SK-N-SH (cell line): ENCODE measurements at regions of chr17 and their contacts with region 1.

Region 1: DNA sequence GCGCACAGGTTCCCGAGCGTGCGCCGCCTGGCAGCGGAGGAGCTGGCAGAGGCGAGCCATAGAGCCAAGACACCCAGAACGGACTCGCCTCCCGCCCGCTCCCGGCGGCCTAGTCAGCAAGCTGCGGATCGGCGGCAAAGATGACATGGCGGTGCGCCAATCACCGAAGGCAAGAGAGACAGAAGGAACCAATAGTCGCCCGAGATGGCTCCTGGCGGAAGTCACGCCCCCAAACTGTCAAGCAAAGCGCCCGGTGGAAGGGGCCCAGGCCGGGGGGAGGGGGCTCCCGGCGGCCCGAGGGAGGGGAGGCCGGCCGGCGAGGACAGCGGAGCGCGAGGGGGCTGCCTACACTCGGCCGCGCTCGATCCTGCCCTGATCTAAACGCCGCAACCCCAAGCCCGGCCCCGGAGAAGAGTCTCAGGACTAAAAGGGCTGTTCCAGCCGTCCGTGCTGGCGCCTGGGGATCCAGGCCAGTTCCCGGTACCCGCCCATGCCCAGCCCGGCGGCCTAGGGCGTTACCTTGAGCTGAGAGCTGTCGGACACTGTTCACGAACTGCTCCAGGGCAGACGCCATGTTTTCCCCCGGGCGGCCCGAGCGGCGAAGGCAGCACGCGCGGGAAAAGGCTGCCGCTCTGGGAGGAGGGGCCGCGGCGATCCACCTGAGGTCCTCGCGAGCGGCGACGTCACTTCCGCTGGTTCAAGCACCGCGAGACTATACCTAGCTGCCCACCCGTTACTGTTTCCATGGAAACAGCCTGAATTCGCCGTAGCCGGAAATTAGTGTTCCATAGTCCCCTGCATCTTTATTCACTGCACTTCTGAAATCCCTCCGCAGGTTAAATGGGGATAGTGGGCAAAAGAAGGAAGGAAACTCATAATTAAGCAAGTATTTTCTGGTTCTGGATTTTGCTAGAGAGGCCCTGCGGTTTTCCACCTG is at the start of gene COPS3:
- DNase-seq: peak; percentile 95
- H3K4me3 ChIP-seq: peak within 1 kb of the TSS; percentile 75 to 85
- H3K27ac ChIP-seq: peak within 1 kb of the TSS; percentile 92
- H3K4me1 ChIP-seq: peaks cover 5 to 7% of the 10 kb centered on the region in 2 experiments; a peak in 3 of 4 replicates
- H3K27me3 ChIP-seq: no peaks in the 10 kb centered on the region
- CTCF ChIP-seq: no peak
- EP300 ChIP-seq: peak in 1 of 2 experiments; percentile 9; a peak in 2 of 4 replicates
- RAD21 ChIP-seq: no peak
- polyA plus RNA-seq, gene COPS3: 64.8 and 76.7 TPM in 2 replicates

Region 2: DNA sequence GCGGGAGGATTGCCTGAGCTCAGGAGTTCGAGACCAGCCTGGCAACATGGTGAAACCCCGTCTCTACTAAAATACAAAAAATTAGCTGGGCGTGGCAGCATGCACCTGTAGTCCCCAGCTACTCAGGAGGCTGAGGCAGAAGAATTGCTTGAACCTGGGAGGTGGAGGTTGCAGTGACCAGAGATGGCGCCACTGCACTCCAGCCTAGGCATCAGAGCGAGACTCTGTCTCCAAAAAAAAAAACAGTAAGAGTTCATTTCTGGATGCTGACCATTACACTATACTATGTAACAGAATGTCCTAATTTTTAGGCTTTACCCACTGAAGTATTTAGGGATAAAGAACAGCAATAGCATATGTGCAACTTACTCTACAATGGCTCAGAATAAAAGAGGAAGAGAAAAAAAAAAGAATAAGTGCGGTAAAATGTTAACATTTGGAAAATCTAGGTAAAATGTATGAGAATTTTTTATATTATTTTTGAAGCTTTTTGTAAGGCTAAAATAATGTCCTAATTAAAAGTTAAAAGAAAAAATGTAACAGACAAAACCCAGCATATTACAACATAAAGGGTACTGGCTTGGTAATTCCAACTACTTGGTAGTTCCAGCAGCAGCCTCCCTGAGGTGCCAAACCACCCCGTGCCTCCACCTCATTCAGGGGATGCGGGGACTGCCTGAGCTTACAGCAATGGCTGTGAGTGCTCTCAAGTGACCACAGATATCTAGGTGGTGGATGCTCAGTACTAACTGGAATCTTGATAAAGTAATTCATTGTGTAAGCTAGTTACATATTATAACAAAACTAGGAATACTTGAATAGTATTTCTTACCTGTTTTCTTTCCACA is 10.7 kb before region 1 on chr17:
- CTCF ChIA-PET with region 1: interaction called, 11 read pairs
- POLR2A ChIA-PET with region 1: interaction called, 3 read pairs
- DNase-seq: no peak
- H3K4me3 ChIP-seq: no peak overlapping the region
- H3K27ac ChIP-seq: no peak overlapping the region
- H3K4me1 ChIP-seq: no peaks in the 10 kb centered on the region
- H3K27me3 ChIP-seq: no peaks in the 10 kb centered on the region
- CTCF ChIP-seq: peak; percentile 55
- EP300 ChIP-seq: no peak
- RAD21 ChIP-seq: 0 out of 2 replicates have a peak, but pooled peaks have one; percentile 7

Region 3: GRCh38 chr17:17347234-17347905 is 66.5 kb after region 1 on chr17:
- CTCF ChIA-PET with region 1: no interaction called
- POLR2A ChIA-PET with region 1: no interaction called
- DNase-seq: peak; percentile 9
- H3K4me3 ChIP-seq: no peak overlapping the region
- H3K27ac ChIP-seq: no peak overlapping the region
- H3K4me1 ChIP-seq: peaks cover 0 to 13% of the 10 kb centered on the region in 2 experiments; a peak in 1 of 4 replicates
- H3K27me3 ChIP-seq: no peaks in the 10 kb centered on the region
- CTCF ChIP-seq: no peak
- EP300 ChIP-seq: no peak
- RAD21 ChIP-seq: no peak